Dorsolateral prefrontal cortex (tissue), 120 donors: ENCODE measurements at regions of chr7 and their contacts with region 1.

Region 1: DNA sequence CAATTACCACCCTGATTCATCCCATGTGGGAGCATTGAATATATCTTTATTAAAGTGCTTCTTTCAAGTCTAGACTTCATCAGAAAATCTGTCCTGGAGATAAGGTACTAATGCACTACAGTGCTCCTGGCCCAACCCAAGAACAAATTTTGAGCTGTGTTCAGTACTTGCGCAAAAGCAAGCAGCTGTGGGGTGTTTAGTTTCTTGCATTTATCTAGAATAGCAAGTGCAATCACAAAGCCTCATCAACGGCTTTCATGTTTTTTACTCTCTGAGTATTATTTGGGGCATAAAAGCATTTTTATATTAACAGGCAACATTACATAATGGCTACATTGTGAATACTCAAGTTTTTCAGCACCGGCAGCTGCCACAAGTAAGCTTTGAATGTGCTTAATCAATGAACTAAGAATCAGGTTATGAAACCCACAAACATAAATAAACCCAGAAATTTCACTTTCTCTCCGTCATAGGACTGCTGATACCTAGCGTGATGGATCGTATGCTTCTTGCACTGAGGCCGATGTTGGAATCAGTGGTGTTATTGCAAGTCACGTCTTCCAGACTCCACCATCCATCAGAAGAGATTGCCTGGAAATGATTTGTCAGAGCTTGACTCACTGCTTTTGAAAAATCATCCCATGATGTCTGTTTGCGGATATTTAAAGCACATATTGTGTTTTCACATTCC is 113.1 kb downstream of the CTTNBP2 start:
- DNase-seq: peak in 2 of 10 donors; percentile 17 to 48
- H3K4me3 ChIP-seq: peak overlapping the region in 18 of 59 donors; percentile 6 to 38 (median 18)
- H3K27ac ChIP-seq: peak overlapping the region; percentile 4 to 92 (median 81)
- H3K27me3 ChIP-seq: no peaks in the 10 kb centered on the region
- CTCF ChIP-seq: no peak

Region 2: DNA sequence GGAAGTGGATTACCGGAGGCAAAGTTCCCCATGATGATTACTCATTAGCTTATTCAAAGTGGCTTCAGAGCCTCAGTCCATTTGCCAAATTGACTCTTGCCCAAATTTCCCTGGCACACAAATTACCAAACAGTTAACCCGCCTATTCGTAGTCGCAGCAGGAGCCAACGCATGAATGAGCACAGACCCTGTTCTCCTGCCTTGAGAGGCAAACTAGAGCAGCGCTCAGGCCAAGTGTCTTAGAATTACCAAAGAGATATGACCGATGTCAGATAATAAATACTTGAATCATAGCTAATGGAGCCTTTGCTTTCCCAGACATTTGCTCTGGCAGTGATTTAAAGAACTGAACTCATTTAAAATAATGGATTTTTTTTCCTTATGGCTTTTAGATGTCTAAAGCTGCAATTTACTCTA is 48.3 kb after region 1 on chr7:
- intact Hi-C with region 1: loop called in 1 of 2 experiments (anchors 5 kb)
- DNase-seq: peak in 6 of 10 donors; percentile 43 to 86 (median 49)
- H3K4me3 ChIP-seq: peak overlapping the region in 16 of 59 donors; percentile 0 to 34 (median 17)
- H3K27ac ChIP-seq: peak overlapping the region in 41 of 59 donors; percentile 2 to 71 (median 28)
- H3K27me3 ChIP-seq: no peaks in the 10 kb centered on the region
- CTCF ChIP-seq: no peak